Heart right ventricle (tissue), 16 donors: ENCODE measurements at regions of chr3 and their contacts with region 1.

Region 1: DNA sequence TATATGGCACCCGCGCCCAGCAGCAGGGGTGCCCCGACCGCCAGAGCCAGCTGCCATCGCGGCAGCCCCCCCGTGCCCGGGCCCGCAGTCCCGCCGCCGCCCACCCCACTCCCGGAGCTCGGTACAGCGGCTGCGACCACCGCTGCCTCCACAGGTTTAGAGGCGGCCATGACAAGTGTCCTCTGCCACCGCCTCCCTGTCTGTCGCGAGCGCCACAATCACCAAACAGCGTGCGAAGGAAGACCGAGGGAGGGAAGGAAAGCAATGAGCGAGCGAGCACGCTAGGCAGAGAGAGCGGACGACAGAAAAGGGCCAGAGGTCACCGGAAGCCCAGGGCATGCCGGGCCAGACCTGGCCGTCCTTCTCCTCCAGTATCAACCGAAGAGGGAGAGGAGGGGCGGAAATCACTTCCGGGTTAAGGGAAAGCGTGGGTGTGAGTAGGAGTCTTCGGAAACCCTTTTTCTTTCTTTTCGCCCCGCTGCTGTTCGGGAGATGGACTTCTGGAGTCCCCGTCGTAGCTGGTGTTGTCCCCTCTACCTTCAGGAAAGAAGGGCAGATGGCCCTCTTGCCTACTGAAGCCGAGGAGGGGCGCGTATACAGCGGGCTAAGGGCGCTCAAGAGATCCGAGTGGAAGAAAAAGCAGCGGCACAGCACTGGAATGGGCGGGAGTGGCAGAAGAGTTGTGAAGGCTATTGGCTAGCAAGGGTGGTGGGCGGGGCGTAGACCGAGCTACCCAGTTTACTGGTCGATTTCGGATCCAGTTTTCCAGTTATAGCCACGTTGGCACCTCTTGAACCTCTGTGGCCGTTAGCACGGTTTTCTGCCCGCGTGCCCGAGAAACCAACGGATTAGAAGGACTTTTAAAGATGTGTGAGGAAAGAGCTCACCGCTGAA is at the starts of genes LNP1 and TOMM70:
- DNase-seq: peak; percentile 96 to 98
- ATAC-seq: peak; percentile 96 to 99 (median 98)
- H3K4me3 ChIP-seq: peak within 1 kb of the TSS; percentile 69 to 98 (median 90)
- H3K27ac ChIP-seq: peak within 1 kb of the TSS; percentile 71 to 98 (median 94)
- H3K4me1 ChIP-seq: peaks cover 0 to 66% (median 54%) of the 10 kb centered on the region in 9 donors
- H3K27me3 ChIP-seq: no peaks in the 10 kb centered on the region
- CTCF ChIP-seq: no peak
- total RNA-seq, gene LNP1: 2.2 to 5.3 (median 4.0) TPM
- total RNA-seq, gene TOMM70: 52.4 to 67.5 (median 61.0) TPM

Region 2: GRCh38 chr3:100334488-100335351 is 66.3 kb before region 1 on chr3 and contains the start of gene NIT2:
- intact Hi-C with region 1: loop called in 2 of 10 experiments (anchors 5 kb)
- DNase-seq: peak; percentile 85 to 88
- ATAC-seq: peak; percentile 94 to 99 (median 98)
- H3K4me3 ChIP-seq: peak within 1 kb of the TSS; percentile 46 to 85 (median 69)
- H3K27ac ChIP-seq: peak within 1 kb of the TSS; percentile 46 to 94 (median 84)
- H3K4me1 ChIP-seq: peaks cover 0 to 21% (median 6%) of the 10 kb centered on the region in 9 donors
- H3K27me3 ChIP-seq: no peaks in the 10 kb centered on the region
- CTCF ChIP-seq: no peak
- total RNA-seq, gene NIT2: 39.7 to 56.7 (median 46.6) TPM

Region 3: DNA sequence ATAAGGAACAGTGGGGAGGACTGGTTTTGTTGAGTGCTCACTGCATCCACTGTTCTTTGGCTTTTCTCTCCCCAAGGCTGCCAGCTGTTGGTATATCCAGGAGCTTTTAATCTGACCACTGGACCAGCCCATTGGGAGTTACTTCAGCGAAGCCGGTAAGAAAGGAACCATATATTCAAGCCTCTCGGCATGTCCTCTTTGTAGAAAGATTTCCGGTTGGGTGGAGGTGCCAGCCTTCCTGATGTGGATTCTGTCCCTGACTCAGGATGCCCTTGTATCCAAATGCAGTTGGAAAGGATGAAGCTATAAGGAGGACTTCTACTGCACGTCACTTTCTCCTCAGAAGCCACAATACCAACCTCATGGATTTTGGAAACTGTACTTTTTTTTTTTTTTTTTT is 52.3 kb before region 1 on chr3:
- intact Hi-C with region 1: loop called in 1 of 10 experiments (anchors 10 kb)
- DNase-seq: no peak
- ATAC-seq: no peak
- H3K4me3 ChIP-seq: no peak overlapping the region
- H3K27ac ChIP-seq: no peak overlapping the region
- H3K4me1 ChIP-seq: peaks cover 0 to 7% (median 0%) of the 10 kb centered on the region in 9 donors
- H3K27me3 ChIP-seq: no peaks in the 10 kb centered on the region
- CTCF ChIP-seq: no peak

Region 4: GRCh38 chr3:100492059-100493006 is 91.3 kb after region 1 on chr3 and contains the start of gene TMEM45A:
- intact Hi-C with region 1: loop called in 1 of 10 experiments (anchors 5 kb)
- DNase-seq: peak; percentile 93 to 97
- ATAC-seq: peak; percentile 100
- H3K4me3 ChIP-seq: peak within 1 kb of the TSS; percentile 32 to 66 (median 58)
- H3K27ac ChIP-seq: peak within 1 kb of the TSS in 9 of 10 donors; percentile 52 to 80 (median 73)
- H3K4me1 ChIP-seq: peaks cover 0 to 22% (median 6%) of the 10 kb centered on the region in 9 donors
- H3K27me3 ChIP-seq: no peaks in the 10 kb centered on the region
- CTCF ChIP-seq: no peak
- total RNA-seq, gene TMEM45A: 0.80 to 7.4 (median 2.1) TPM

Region 5: GRCh38 chr3:100748220-100748619 is 347.2 kb after region 1 on chr3:
- intact Hi-C with region 1: no loop called
- DNase-seq: no peak
- ATAC-seq: no peak
- H3K4me3 ChIP-seq: no peak overlapping the region
- H3K27ac ChIP-seq: no peak overlapping the region
- H3K4me1 ChIP-seq: peaks cover 0 to 10% (median 0%) of the 10 kb centered on the region in 9 donors
- H3K27me3 ChIP-seq: no peaks in the 10 kb centered on the region
- CTCF ChIP-seq: no peak